Aorta (tissue), 5 donors: ENCODE measurements at regions of chr6 and their contacts with region 1.

Region 1: GRCh38 chr6:12595161-12595811 is 121.3 kb upstream of the PHACTR1 start:
- DNase-seq: no peak
- ATAC-seq: peak; percentile 60
- H3K4me3 ChIP-seq: no peak overlapping the region
- H3K27ac ChIP-seq: no peak overlapping the region
- H3K4me1 ChIP-seq: no peaks in the 10 kb centered on the region
- H3K27me3 ChIP-seq: no peaks in the 10 kb centered on the region

Region 2: GRCh38 chr6:12403201-12403826 is 192.0 kb before region 1 on chr6:
- intact Hi-C with region 1: loop called in 1 of 2 experiments (anchors 10 kb)
- DNase-seq: no peak
- ATAC-seq: peak; percentile 53
- H3K4me3 ChIP-seq: no peak overlapping the region
- H3K27ac ChIP-seq: peak overlapping the region; percentile 36 to 71
- H3K4me1 ChIP-seq: peaks cover 5 to 11% of the 10 kb centered on the region in 2 donors
- H3K27me3 ChIP-seq: no peaks in the 10 kb centered on the region

Region 3: GRCh38 chr6:12555267-12555666 is 40.0 kb before region 1 on chr6:
- intact Hi-C with region 1: loop called in 1 of 2 experiments (anchors 5 kb)
- DNase-seq: no peak
- ATAC-seq: no peak
- H3K4me3 ChIP-seq: no peak overlapping the region
- H3K27ac ChIP-seq: no peak overlapping the region
- H3K4me1 ChIP-seq: no peaks in the 10 kb centered on the region
- H3K27me3 ChIP-seq: no peaks in the 10 kb centered on the region